Activated B cell treated with CpG ODN at 0.5 μM for 24 hours (primary cell): ENCODE measurements at regions of chr12 and their contacts with region 1.

Region 1: GRCh38 chr12:122860346-122861090 is 25.3 kb downstream of the HIP1R start:
- DNase-seq: peak; percentile 76
- ATAC-seq: peak; percentile 72
- H3K4me3 Mint-ChIP-seq: no peak overlapping the region
- H3K27ac Mint-ChIP-seq: no peak overlapping the region
- H3K4me1 Mint-ChIP-seq: peaks cover 49% of the 10 kb centered on the region
- H3K27me3 Mint-ChIP-seq: no peaks in the 10 kb centered on the region
- CTCF ChIP-seq: peak; percentile 72

Region 2: DNA sequence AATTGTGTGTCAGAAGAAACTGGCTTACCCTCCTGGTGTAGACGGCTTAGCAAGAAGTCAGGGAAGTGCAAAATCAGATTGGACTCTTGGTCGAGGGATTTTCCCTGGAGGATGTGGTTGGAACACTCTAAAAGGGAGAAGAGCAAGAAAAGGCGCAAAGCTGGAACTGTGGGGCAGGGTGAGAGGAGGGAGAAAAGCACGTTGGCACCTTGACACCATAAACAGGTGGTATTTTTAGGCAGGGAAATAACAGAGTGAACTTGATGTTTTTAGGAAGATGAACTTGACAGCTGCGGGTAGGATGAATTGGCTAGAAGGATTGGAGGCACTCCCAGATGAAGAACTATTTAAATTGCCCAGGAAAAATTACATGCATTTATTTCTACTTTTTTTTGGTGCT is 225.0 kb before region 1 on chr12:
- CTCF ChIA-PET with region 1: interaction called, 6 read pairs
- POLR2A ChIA-PET with region 1: interaction called, 4 read pairs
- intact Hi-C with region 1: loop called (anchors 5 kb)
- DNase-seq: no peak
- ATAC-seq: no peak
- H3K4me3 Mint-ChIP-seq: no peak overlapping the region
- H3K27ac Mint-ChIP-seq: no peak overlapping the region
- H3K4me1 Mint-ChIP-seq: peaks cover 9% of the 10 kb centered on the region
- H3K27me3 Mint-ChIP-seq: no peaks in the 10 kb centered on the region
- CTCF ChIP-seq: no peak

Region 3: DNA sequence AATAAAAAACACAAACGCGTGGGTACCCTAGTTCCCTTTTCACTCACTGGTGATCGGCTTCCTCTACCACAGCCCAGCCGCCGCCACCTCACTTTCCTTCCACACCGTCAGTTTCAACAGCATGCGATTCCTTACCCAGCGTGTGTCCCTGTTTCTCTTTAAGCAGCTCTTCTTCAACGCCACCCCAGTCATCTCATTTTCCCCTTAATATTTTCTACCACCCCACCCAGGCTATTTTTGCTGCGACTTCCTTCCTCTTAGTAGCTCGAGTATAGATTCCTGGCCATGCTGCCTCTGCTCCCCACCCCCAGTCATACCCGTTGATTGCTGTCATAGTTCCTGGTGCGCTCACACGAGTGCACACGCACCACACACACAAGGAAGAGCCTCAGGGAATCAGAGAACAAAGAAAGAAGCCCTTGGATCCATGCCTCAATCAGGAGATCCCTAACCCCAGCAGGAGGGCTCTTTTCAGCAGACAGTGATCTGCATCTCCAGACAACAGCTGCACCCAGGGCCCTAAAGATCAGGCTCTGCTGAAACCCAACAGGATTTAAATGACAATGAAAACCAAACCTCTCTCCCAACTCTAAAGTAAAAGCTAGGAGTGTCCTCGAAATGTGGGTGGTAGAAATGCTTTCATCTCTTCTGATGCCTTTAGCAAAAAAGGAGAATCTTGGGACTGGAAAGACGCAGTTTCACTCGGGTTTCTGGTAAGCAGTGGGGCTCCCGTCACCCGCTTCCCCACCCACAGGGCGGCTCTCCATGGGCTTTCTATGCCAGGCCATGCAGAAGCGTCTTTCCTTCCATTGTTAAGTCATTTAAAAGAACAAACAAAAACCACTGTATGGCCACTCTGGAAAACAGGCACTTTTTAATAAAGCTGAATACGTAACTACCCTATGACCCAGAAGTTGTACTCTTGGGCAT is 11.6 kb after region 1 on chr12:
- CTCF ChIA-PET with region 1: interaction called, 26 read pairs
- POLR2A ChIA-PET with region 1: interaction called, 26 read pairs
- intact Hi-C with region 1: no loop called
- DNase-seq: peak; percentile 46
- ATAC-seq: peak; percentile 66
- H3K4me3 Mint-ChIP-seq: peak overlapping the region; percentile 84
- H3K27ac Mint-ChIP-seq: peak overlapping the region; percentile 93
- H3K4me1 Mint-ChIP-seq: peaks cover 91% of the 10 kb centered on the region
- H3K27me3 Mint-ChIP-seq: no peaks in the 10 kb centered on the region
- CTCF ChIP-seq: no peak

Region 4: DNA sequence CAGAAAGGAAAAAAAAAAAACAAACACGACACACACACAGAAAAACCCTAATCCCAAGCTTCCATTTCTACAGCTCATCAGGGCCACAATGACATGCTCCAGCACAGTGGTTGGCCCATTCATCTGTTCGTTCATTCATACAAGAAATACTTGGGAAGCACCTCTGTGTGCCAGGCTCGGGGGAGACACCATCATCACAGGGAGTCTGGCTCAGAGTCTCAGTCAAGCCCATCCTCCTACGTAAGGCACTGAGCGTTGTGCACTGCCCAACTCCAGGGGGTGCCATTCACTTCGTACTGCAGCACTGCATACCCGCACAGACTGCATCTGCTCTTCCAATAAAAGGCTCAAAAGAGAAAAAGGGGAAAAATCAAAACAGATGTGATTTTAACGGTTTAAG is 20.1 kb after region 1 on chr12:
- CTCF ChIA-PET with region 1: interaction called, 12 read pairs
- POLR2A ChIA-PET with region 1: interaction called, 4 read pairs
- intact Hi-C with region 1: no loop called
- DNase-seq: no peak
- ATAC-seq: peak; percentile 70
- H3K4me3 Mint-ChIP-seq: peak overlapping the region; percentile 26
- H3K27ac Mint-ChIP-seq: peak overlapping the region; percentile 32
- H3K4me1 Mint-ChIP-seq: peaks cover 94% of the 10 kb centered on the region
- H3K27me3 Mint-ChIP-seq: no peaks in the 10 kb centered on the region
- CTCF ChIP-seq: no peak

Region 5: GRCh38 chr12:122951979-122952892 is 91.7 kb after region 1 on chr12:
- CTCF ChIA-PET with region 1: interaction called, 145 read pairs
- POLR2A ChIA-PET with region 1: interaction called, 8 read pairs
- intact Hi-C with region 1: loop called (anchors 1 kb)
- DNase-seq: peak; percentile 60
- ATAC-seq: peak; percentile 96
- H3K4me3 Mint-ChIP-seq: no peak overlapping the region
- H3K27ac Mint-ChIP-seq: peak overlapping the region; percentile 18
- H3K4me1 Mint-ChIP-seq: peaks cover 24% of the 10 kb centered on the region
- H3K27me3 Mint-ChIP-seq: no peaks in the 10 kb centered on the region
- CTCF ChIP-seq: peak; percentile 79